ENCODE measurements at regions of chr18 and their contacts with region 1.

Region 1: DNA sequence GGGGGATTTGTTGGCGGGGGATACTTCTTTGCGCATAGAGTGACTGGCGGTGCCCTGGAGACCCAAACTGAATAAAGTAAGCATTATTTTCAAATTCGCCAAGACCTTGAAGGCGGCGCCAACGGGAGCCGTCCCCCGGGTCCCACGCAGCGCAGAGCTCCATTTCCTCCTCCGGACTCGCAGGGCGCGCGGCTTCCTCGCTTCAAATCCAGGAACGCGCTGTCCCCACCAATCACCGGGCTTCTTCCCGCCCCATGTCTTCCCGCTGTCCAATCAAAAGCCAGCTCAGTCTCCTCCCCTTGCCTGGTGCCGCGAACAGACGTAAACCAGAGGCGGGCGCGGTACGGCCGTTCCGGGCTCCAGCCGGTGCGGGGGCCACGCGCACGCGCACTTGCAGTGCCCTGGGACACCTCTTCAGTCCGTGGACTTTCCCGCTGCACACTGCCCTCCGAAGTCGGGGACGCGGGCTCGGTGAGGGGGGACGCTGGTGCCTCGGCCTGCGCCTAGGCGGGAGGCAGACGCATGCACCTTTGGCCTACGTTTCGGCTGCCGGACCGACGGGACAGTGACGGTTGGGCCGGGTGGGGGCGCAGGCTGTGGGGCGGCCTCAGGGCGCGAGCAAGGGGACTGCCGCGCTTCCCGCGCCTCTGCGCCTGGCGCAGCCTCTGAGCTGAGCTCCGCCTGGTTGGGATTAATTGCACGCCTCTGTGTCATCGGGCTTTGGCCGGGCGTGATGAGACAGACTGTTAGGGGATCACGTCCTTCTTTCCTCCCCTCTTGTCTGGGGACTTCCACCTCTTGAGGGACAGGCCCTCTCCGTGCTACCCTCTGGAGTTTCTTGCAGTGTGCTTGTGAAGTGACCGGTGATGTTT is at the start of gene CEP192:
- DNase-seq: peak; percentile 94 to 99
- H3K4me3 ChIP-seq: peak within 1 kb of the TSS; percentile 83
- H3K27ac ChIP-seq: peak within 1 kb of the TSS; percentile 79
- H3K4me1 ChIP-seq: peaks cover 26% of the 10 kb centered on the region
- H3K27me3 ChIP-seq: no peaks in the 10 kb centered on the region
- CTCF ChIP-seq: no peak
- total RNA-seq, gene CEP192: 37.8 and 44.9 TPM in 2 replicates

Region 2: DNA sequence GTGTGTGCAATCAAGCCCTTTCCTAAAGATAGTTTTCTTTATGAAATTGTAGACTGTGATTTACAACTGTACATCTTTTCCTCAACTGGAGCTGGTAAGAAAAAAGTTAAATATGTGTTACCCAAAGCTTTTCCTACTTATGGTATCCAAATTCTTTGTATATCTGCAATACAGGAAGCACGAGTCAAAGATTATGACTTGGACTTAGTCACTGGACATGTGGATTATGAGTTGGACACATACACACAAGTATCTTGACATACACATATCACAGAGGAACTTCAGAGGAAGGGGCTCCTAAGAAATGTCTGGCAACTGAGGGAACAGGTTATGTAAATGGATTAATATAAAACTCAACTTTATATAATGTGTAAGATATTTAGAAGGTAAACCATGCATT is 548.3 kb before region 1 on chr18:
- CTCF ChIA-PET with region 1: no interaction called
- POLR2A ChIA-PET with region 1: no interaction called
- intact Hi-C with region 1: no loop called
- DNase-seq: no peak
- H3K4me3 ChIP-seq: no peak overlapping the region
- H3K27ac ChIP-seq: no peak overlapping the region
- H3K4me1 ChIP-seq: no peaks in the 10 kb centered on the region
- H3K27me3 ChIP-seq: no peaks in the 10 kb centered on the region
- CTCF ChIP-seq: no peak

Region 3: DNA sequence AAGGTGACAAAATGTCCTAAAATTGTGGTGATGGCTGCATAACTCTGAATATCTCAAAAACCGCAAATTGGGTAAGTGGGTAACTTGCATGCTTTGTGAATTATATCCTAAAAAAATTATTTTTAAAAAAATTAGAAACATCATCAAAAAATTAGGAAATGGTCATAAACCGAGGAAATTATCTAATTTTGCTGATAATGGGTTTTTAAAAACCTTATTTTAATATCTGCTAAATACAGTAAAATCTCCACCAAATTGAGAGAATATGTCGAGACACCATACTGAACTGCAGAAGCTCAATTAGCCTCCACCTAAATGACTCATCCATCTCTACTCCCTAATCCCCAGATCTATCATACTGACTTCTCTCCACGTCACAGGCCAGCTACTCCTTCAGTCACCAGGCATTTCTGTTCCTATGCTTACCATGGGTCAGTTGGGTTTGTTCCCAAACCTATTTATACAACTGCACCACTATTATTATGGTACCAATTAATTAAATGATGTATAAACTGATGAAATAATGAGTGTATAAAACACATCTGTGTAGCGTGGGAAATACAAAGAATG is 369.4 kb before region 1 on chr18:
- CTCF ChIA-PET with region 1: no interaction called
- POLR2A ChIA-PET with region 1: no interaction called
- intact Hi-C with region 1: no loop called
- DNase-seq: no peak
- H3K4me3 ChIP-seq: no peak overlapping the region
- H3K27ac ChIP-seq: no peak overlapping the region
- H3K4me1 ChIP-seq: no peaks in the 10 kb centered on the region
- H3K27me3 ChIP-seq: no peaks in the 10 kb centered on the region
- CTCF ChIP-seq: no peak

Region 4: DNA sequence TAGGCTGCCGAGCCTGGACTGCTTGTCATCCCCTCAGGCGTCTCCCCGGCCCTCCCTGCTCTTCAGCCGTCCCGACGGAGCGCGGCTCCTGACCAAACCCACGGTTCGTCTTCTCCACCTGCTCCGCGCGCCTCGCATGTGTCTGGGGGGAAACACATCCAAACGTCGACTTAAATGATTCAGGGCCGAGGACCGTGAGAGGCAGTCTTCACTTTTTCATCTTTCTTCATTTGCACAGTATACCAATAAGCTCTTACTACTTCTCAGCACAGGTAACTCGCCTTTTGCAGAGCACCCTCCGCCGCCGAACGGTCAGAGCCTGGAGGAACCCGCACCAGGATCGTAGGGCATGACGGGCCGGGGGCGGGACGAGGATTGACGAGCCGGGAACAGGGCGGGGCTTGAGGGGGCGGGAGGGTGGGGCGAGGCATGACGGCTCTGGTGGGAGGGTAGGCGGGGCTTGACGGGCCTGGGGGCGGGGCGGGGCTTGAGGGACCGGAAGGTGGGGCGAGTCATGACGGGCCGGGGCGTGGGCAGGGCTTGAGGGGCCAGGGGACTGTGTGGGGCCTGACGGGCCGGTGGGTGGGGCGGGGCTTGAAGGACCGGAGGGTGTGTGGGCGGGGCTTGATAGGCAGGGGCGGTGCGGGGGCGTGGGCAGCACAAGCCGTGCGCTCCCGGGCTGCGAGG is 43.7 kb before region 1 on chr18 and contains the start of gene SEH1L:
- CTCF ChIA-PET with region 1: no interaction called
- POLR2A ChIA-PET with region 1: interaction called, 4 read pairs
- intact Hi-C with region 1: loop called (anchors 1 kb)
- DNase-seq: peak; percentile 81 to 98
- H3K4me3 ChIP-seq: peak within 1 kb of the TSS; percentile 98
- H3K27ac ChIP-seq: peak within 1 kb of the TSS; percentile 95
- H3K4me1 ChIP-seq: peaks cover 32% of the 10 kb centered on the region
- H3K27me3 ChIP-seq: no peaks in the 10 kb centered on the region
- CTCF ChIP-seq: no peak
- total RNA-seq, gene SEH1L: 98.3 and 101 TPM in 2 replicates

Region 5: DNA sequence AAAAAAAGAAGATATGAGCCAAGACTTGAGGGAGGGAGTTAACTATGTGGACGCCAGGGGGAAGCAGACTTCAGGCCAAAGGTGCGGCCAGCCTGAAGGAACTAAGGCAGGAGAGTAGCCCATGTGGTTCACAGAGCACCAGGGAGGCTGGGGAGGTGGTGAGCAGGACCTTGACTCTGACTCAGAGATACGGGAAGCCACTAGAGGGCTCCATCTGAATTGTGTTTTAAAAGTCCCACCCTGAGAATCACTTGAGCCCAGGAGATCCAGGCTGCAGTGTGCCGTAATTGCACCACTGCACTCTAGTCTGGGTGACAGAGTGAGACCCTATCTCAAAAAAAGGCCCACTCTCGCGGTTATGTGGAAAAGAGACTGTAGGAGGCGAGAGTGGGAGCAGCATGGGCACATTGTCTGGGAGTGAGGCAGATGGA is 12.3 kb after region 1 on chr18:
- CTCF ChIA-PET with region 1: no interaction called
- POLR2A ChIA-PET with region 1: interaction called, 14 read pairs
- intact Hi-C with region 1: no loop called
- DNase-seq: no peak
- H3K4me3 ChIP-seq: no peak overlapping the region
- H3K27ac ChIP-seq: no peak overlapping the region
- H3K4me1 ChIP-seq: no peaks in the 10 kb centered on the region
- H3K27me3 ChIP-seq: no peaks in the 10 kb centered on the region
- CTCF ChIP-seq: peak; percentile 53; the same call in 1 of the 2 replicates

Region 6: DNA sequence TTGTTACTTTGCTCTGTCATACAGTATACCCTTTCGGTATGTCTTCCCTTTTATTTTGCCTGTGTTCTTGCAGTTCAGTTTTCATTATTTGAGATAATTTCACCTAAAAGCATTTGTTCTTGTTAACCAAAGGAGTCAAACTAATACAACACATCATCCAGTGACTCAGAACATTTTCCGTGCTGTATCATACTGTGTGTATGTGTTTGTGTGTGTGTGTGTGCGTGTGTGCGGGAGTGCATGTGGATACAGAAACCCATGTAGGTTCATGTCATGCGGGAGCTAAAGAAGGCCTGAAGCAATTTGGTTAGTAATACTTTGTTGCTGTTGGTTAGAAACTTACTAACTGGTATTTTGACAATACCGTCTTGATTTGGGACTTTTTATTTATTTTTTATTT is 60.0 kb after region 1 on chr18:
- CTCF ChIA-PET with region 1: no interaction called
- POLR2A ChIA-PET with region 1: interaction called, 29 read pairs
- intact Hi-C with region 1: no loop called
- DNase-seq: no peak
- H3K4me3 ChIP-seq: no peak overlapping the region
- H3K27ac ChIP-seq: no peak overlapping the region
- H3K4me1 ChIP-seq: no peaks in the 10 kb centered on the region
- H3K27me3 ChIP-seq: no peaks in the 10 kb centered on the region
- CTCF ChIP-seq: no peak

Region 7: GRCh38 chr18:13660510-13660909 is 669.3 kb after region 1 on chr18:
- CTCF ChIA-PET with region 1: interaction called, 11 read pairs
- POLR2A ChIA-PET with region 1: no interaction called
- intact Hi-C with region 1: no loop called
- DNase-seq: no peak
- H3K4me3 ChIP-seq: no peak overlapping the region
- H3K27ac ChIP-seq: no peak overlapping the region
- H3K4me1 ChIP-seq: no peaks in the 10 kb centered on the region
- H3K27me3 ChIP-seq: no peaks in the 10 kb centered on the region
- CTCF ChIP-seq: no peak

Measured in PC-9 (cell line).